ENCODE measurements at regions of chr1 and their contacts with region 1.

Region 1: GRCh38 chr1:27300341-27301051 is 21.5 kb upstream of the TMEM222 start:
- DNase-seq: peak; percentile 85
- H3K4me3 Mint-ChIP-seq: no peak overlapping the region
- H3K27ac Mint-ChIP-seq: peak overlapping the region; percentile 67
- H3K4me1 Mint-ChIP-seq: peaks cover 13% of the 10 kb centered on the region
- H3K27me3 Mint-ChIP-seq: no peaks in the 10 kb centered on the region
- CTCF ChIP-seq: peak; percentile 99

Region 2: GRCh38 chr1:26938004-26938658 is 362.4 kb before region 1 on chr1:
- CTCF ChIA-PET with region 1: no interaction called
- POLR2A ChIA-PET with region 1: no interaction called
- intact Hi-C with region 1: no loop called
- DNase-seq: no peak
- H3K4me3 Mint-ChIP-seq: no peak overlapping the region
- H3K27ac Mint-ChIP-seq: peak overlapping the region; percentile 75
- H3K4me1 Mint-ChIP-seq: no peaks in the 10 kb centered on the region
- H3K27me3 Mint-ChIP-seq: no peaks in the 10 kb centered on the region
- CTCF ChIP-seq: no peak

Region 3: DNA sequence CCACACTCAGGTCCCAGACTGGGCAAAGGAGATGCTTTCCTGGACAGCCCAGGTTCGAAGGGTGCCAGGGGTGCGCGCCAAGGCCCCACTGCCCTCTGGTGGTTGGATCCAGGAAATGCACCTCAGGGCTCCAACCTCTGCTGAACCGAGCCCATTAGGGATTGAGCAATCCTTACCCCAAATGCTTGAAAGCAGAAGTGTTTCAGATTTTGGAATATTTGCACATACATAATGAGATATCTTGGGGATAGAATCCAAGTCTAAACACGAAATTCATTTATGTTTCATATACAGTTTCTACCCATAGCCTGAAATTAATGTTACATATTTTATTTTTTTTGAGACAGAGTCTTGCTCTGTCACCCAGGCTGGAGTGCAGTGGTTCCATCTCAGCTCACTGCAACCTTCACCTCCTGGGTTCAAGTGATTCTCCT is 203.0 kb before region 1 on chr1:
- CTCF ChIA-PET with region 1: interaction called, 119 read pairs
- POLR2A ChIA-PET with region 1: interaction called, 4 read pairs
- intact Hi-C with region 1: no loop called
- DNase-seq: peak; percentile 86
- H3K4me3 Mint-ChIP-seq: no peak overlapping the region
- H3K27ac Mint-ChIP-seq: peak overlapping the region; percentile 43
- H3K4me1 Mint-ChIP-seq: peaks cover 24% of the 10 kb centered on the region
- H3K27me3 Mint-ChIP-seq: no peaks in the 10 kb centered on the region
- CTCF ChIP-seq: peak; percentile 94

Region 4: GRCh38 chr1:27284425-27285273 is 15.8 kb before region 1 on chr1:
- CTCF ChIA-PET with region 1: interaction called, 92 read pairs
- POLR2A ChIA-PET with region 1: no interaction called
- intact Hi-C with region 1: no loop called
- DNase-seq: peak; percentile 83
- H3K4me3 Mint-ChIP-seq: no peak overlapping the region
- H3K27ac Mint-ChIP-seq: no peak overlapping the region
- H3K4me1 Mint-ChIP-seq: no peaks in the 10 kb centered on the region
- H3K27me3 Mint-ChIP-seq: no peaks in the 10 kb centered on the region
- CTCF ChIP-seq: peak; percentile 75

Region 5: GRCh38 chr1:27332536-27333281 is 32.2 kb after region 1 on chr1:
- CTCF ChIA-PET with region 1: interaction called, 57 read pairs
- POLR2A ChIA-PET with region 1: no interaction called
- intact Hi-C with region 1: no loop called
- DNase-seq: peak; percentile 56
- H3K4me3 Mint-ChIP-seq: no peak overlapping the region
- H3K27ac Mint-ChIP-seq: peak overlapping the region; percentile 35
- H3K4me1 Mint-ChIP-seq: peaks cover 9% of the 10 kb centered on the region
- H3K27me3 Mint-ChIP-seq: no peaks in the 10 kb centered on the region
- CTCF ChIP-seq: peak; percentile 75

Region 6: GRCh38 chr1:27365372-27366112 is 65.0 kb after region 1 on chr1:
- CTCF ChIA-PET with region 1: interaction called, 31 read pairs
- POLR2A ChIA-PET with region 1: interaction called, 24 read pairs
- intact Hi-C with region 1: no loop called
- DNase-seq: peak; percentile 89
- H3K4me3 Mint-ChIP-seq: peak overlapping the region; percentile 85
- H3K27ac Mint-ChIP-seq: peak overlapping the region; percentile 96
- H3K4me1 Mint-ChIP-seq: peaks cover 12% of the 10 kb centered on the region
- H3K27me3 Mint-ChIP-seq: no peaks in the 10 kb centered on the region
- CTCF ChIP-seq: no peak